K562 (cell line): ENCODE measurements at regions of chr2 and their contacts with region 1.

Region 1: GRCh38 chr2:216222650-216223352 is 113.7 kb downstream of the XRCC5 start:
- DNase-seq: no peak
- ATAC-seq: peak; percentile 66
- H3K4me3 ChIP-seq: no peak overlapping the region
- H3K27ac ChIP-seq: no peak overlapping the region
- H3K4me1 ChIP-seq: peaks cover 0 to 12% of the 10 kb centered on the region in 2 experiments; a peak in 4 of 5 replicates
- H3K27me3 ChIP-seq: no peaks in the 10 kb centered on the region
- CTCF ChIP-seq: peak; percentile 35 to 53 (median 43); a peak in 4 of 6 replicates
- EP300 ChIP-seq: no peak
- POLR2A ChIP-seq: no peak
- RAD21 ChIP-seq: peak; percentile 57 to 65

Region 2: DNA sequence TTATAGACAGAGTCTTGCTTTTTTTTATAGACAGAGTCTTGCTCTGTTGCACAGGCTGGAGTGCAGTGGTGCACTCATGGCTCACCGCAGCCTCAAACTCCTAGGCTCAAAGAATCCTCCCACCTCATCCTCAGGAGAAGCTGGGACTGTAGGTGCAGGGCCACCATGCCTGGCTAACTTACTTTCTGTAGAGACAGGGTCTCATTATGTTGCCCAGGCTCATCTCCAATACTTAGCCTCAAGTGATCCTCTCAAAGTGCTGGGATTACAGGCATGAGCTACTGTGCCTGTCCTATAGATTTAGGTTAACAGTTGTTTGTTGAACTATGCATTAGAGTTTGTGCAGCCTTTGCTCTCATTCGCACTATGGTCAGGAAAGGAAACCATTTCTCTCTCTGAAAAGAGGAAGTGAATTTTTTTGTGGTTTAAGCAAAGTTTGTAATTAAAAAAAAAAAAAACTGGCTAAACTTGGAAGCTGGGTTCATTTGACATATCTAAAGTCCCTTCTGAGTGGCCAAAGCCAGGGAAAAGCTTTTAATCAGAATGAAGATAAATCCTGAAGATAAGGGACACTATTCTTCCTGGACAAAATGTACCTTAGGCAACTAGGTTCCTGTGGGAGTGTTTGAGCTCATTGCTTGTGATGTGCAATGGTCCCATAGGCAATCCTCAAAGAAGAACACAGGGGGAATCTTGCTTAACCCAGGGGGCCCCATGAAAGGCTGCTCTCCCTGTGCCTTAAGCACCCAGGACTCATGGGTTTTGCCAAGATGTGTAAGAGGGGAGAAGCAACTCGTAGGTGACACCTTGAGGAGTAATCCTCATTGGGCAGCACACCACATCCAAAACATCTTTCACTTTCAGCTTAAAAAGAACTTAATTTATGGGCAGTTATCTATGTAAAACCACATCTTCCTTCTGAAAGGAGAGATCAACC is 411.1 kb before region 1 on chr2:
- CTCF ChIA-PET with region 1: no interaction called
- POLR2A ChIA-PET with region 1: no interaction called
- in situ Hi-C with region 1: no loop called
- intact Hi-C with region 1: no loop called
- DNase-seq: no peak
- ATAC-seq: peak; percentile 51
- H3K4me3 ChIP-seq: no peak overlapping the region
- H3K27ac ChIP-seq: peak overlapping the region; percentile 38; the same call in 1 of the 3 replicates
- H3K4me1 ChIP-seq: peaks cover 0 to 20% of the 10 kb centered on the region in 2 experiments; a peak in 4 of 5 replicates
- H3K27me3 ChIP-seq: no peaks in the 10 kb centered on the region
- CTCF ChIP-seq: no peak
- EP300 ChIP-seq: no peak
- POLR2A ChIP-seq: no peak
- RAD21 ChIP-seq: peak in 1 of 2 experiments; percentile 11; a peak in 1 of 4 replicates

Region 3: GRCh38 chr2:216206041-216206703 is 16.6 kb before region 1 on chr2:
- CTCF ChIA-PET with region 1: no interaction called
- POLR2A ChIA-PET with region 1: interaction called, 10 read pairs
- in situ Hi-C with region 1: no loop called
- intact Hi-C with region 1: no loop called
- DNase-seq: no peak
- ATAC-seq: no peak
- H3K4me3 ChIP-seq: no peak overlapping the region
- H3K27ac ChIP-seq: no peak overlapping the region
- H3K4me1 ChIP-seq: peaks cover 0 to 2% of the 10 kb centered on the region in 2 experiments; a peak in 2 of 5 replicates
- H3K27me3 ChIP-seq: no peaks in the 10 kb centered on the region
- CTCF ChIP-seq: no peak
- EP300 ChIP-seq: no peak
- POLR2A ChIP-seq: no peak
- RAD21 ChIP-seq: no peak

Region 4: DNA sequence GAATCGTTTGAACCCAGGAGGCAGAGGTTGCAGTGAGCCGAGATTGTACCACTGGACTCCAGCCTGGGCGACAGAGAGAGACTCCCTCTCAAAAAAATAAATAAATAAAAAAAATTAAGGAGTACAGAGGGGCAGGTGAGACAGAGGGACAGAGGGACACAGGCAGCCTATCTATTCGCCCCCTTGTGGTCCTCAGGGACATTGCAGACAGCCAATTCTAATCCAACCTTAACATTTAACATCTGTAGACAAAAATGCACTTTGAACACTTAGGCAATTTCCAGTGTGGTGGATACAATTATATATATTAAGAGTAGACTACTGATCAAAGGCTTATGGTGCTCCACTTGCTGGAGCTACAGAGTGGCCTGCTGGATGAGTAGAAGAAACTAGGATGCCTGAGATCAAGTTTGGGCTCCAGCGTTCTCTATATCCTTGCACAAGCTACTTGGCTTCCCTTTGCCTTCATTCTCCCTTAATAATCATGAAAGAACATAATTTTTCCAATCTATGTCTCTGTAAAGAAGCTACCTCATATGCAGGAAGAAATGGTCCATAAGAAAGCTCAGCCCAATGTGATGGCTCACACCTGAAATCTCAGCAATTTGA is 181.3 kb after region 1 on chr2:
- CTCF ChIA-PET with region 1: interaction called, 4 read pairs
- POLR2A ChIA-PET with region 1: no interaction called
- in situ Hi-C with region 1: no loop called
- intact Hi-C with region 1: loop called (anchors 5 kb)
- DNase-seq: peak; percentile 34 to 39 (median 36)
- ATAC-seq: peak; percentile 81
- H3K4me3 ChIP-seq: no peak overlapping the region
- H3K27ac ChIP-seq: no peak overlapping the region
- H3K4me1 ChIP-seq: no peaks in the 10 kb centered on the region; a peak in 1 of 5 replicates
- H3K27me3 ChIP-seq: peaks cover 2 to 10% of the 10 kb centered on the region in 2 experiments; a peak in 3 of 5 replicates
- CTCF ChIP-seq: peak; percentile 58 to 69 (median 66)
- EP300 ChIP-seq: no peak
- POLR2A ChIP-seq: no peak
- RAD21 ChIP-seq: peak; percentile 59 to 68

Region 5: GRCh38 chr2:216519154-216519762 is 296.5 kb after region 1 on chr2:
- CTCF ChIA-PET with region 1: no interaction called
- POLR2A ChIA-PET with region 1: no interaction called
- in situ Hi-C with region 1: no loop called
- intact Hi-C with region 1: loop called (anchors 5 kb)
- DNase-seq: peak; percentile 41 to 75 (median 51)
- ATAC-seq: peak; percentile 91
- H3K4me3 ChIP-seq: no peak overlapping the region
- H3K27ac ChIP-seq: no peak overlapping the region
- H3K4me1 ChIP-seq: no peaks in the 10 kb centered on the region; a peak in 1 of 5 replicates
- H3K27me3 ChIP-seq: no peaks in the 10 kb centered on the region
- CTCF ChIP-seq: peak; percentile 46 to 60 (median 59); a peak in 5 of 6 replicates
- EP300 ChIP-seq: no peak
- POLR2A ChIP-seq: no peak
- RAD21 ChIP-seq: peak; percentile 77 to 91

Region 6: DNA sequence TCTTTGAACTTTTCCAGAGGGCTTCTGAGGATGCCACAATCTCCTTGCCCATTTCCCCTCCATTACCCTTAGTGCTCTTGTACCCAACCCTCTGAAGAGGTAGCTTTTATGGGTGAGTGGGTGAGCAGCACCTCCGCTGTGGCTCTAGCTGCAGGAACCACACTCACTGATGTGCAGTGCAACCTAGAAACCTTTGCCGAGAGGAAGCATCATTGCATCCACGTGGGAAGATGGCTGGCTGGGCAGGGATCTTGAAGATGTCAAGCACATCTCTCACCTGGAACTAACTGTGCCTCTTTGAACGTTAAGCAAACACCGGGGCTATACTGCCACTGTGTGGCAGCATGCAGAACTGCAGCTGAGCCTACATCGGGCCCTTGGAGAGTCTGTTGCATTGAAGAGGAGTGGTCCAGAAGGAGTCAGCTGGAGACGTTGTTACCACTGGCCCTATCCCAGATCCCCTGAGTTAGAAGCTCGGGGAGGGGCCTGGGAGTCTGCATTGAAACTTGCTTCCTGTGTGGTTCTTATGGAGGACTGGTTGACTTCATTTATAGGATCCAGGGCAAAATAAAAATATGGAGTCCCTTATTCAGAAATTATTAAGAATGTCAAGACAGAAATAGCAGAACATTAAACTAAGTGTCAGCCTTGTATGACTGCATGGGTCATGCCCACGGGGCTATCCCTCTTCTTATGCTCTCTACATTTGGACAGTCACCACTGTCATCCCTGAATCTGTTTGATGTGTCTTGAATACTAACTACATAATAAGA is 443.8 kb after region 1 on chr2:
- CTCF ChIA-PET with region 1: no interaction called
- POLR2A ChIA-PET with region 1: no interaction called
- in situ Hi-C with region 1: loop called (anchors 25 kb)
- intact Hi-C with region 1: loop called (anchors 2 kb)
- DNase-seq: peak; percentile 64 to 75 (median 66)
- ATAC-seq: peak; percentile 84
- H3K4me3 ChIP-seq: no peak overlapping the region
- H3K27ac ChIP-seq: no peak overlapping the region
- H3K4me1 ChIP-seq: peaks cover 9 to 10% of the 10 kb centered on the region in 2 experiments; a peak in 4 of 5 replicates
- H3K27me3 ChIP-seq: peaks cover 4 to 40% of the 10 kb centered on the region in 2 experiments; a peak in 4 of 5 replicates
- CTCF ChIP-seq: peak; percentile 84 to 90 (median 86)
- EP300 ChIP-seq: no peak
- POLR2A ChIP-seq: no peak
- RAD21 ChIP-seq: peak; percentile 88 to 93